ENCODE measurements at regions of chr1 and their contacts with region 1.

Region 1: GRCh38 chr1:202112839-202113672 is 9.7 kb upstream of the GPR37L1 start:
- DNase-seq: peak; percentile 61 to 68
- ATAC-seq: peak; percentile 62 to 80 (median 77)
- H3K4me3 ChIP-seq: no peak overlapping the region
- H3K27ac ChIP-seq: peak overlapping the region; percentile 39 to 85 (median 70)
- H3K4me1 ChIP-seq: peaks cover 0 to 33% (median 19%) of the 10 kb centered on the region in 9 donors
- H3K27me3 ChIP-seq: no peaks in the 10 kb centered on the region
- CTCF ChIP-seq: no peak

Region 2: DNA sequence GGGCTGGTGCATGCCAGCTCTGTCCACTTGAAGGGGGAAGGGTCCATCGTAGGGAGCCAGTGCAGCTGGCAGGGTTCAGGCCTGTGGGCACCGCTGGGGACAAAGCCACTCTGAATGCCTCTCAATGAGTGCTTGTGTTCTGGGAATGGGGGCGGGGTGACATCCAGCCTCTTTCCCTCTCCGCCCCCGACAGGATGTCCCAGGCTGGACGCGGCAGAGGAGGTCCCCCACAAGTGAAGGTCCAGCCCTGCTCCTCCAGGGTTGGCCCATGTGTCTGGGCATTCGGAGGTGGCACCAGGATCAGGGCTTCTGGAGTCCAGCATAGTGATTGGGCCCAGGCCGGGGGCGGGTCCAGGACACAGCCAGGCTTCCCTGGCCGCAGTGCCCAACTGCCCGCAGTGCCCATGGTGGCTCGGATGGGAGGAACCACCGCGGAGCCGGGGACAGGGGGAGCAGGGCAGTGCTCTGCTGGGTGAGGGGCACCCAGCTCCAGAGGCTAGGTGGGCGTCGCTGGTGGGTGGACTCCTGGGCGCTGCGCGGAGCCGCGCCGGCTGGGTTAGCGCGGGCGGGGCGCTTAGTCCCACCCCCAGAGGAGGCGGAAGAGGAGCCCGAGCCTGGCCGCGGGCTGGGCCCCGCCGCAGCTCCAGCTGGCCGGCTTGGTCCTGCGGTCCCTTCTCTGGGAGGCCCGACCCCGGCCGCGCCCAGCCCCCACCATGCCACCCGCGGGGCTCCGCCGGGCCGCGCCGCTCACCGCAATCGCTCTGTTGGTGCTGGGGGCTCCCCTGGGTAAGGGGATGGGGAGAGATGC is 224.6 kb before region 1 on chr1 and contains the start of gene SHISA4:
- intact Hi-C with region 1: loop called in 3 of 10 experiments (anchors 10 kb)
- DNase-seq: peak; percentile 84
- ATAC-seq: peak; percentile 77 to 88 (median 83)
- H3K4me3 ChIP-seq: peak within 1 kb of the TSS; percentile 51 to 91 (median 78)
- H3K27ac ChIP-seq: peak within 1 kb of the TSS; percentile 8 to 88 (median 83)
- H3K4me1 ChIP-seq: peaks cover 14 to 72% (median 49%) of the 10 kb centered on the region in 9 donors
- H3K27me3 ChIP-seq: peaks cover 0 to 38% (median 0%) of the 10 kb centered on the region in 7 donors
- CTCF ChIP-seq: no peak
- total RNA-seq, gene SHISA4: 104 to 214 (median 130) TPM

Region 3: DNA sequence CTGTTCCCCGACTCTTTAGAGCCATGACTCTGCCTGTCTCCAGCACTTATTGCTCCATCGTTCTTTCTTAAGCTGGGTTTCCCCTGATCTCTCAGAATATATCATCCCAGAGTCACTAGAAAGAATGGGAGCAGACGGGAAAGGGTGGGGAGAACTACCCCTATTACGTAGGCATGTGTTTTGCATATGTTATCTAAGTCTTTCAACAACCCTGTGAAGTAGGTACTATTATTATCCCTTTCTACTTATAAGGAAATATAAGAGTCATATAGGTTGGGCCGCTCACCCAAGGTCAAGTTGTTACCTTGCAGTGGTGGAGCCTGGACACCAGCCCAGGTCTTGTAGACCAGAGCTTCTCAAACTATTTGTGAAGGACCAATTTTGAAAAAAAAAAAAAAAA is 63.9 kb before region 1 on chr1:
- intact Hi-C with region 1: loop called in 1 of 10 experiments (anchors 2 kb)
- DNase-seq: no peak
- ATAC-seq: peak in 7 of 8 donors; percentile 24 to 95 (median 82)
- H3K4me3 ChIP-seq: no peak overlapping the region
- H3K27ac ChIP-seq: peak overlapping the region in 5 of 10 donors; percentile 37 to 71 (median 48)
- H3K4me1 ChIP-seq: peaks cover 0 to 6% (median 0%) of the 10 kb centered on the region in 9 donors
- H3K27me3 ChIP-seq: no peaks in the 10 kb centered on the region
- CTCF ChIP-seq: no peak